ENCODE measurements at regions of chr17 and their contacts with region 1.

Region 1: GRCh38 chr17:57234751-57235117 is 21.6 kb upstream of the MSI2 start:
- DNase-seq: no peak
- ATAC-seq: no peak
- H3K4me3 ChIP-seq: no peak overlapping the region
- H3K27ac ChIP-seq: no peak overlapping the region
- H3K4me1 ChIP-seq: no peaks in the 10 kb centered on the region
- H3K27me3 ChIP-seq: no peaks in the 10 kb centered on the region
- CTCF ChIP-seq: no peak

Region 2: GRCh38 chr17:57284984-57285646 is 50.4 kb after region 1 on chr17:
- intact Hi-C with region 1: loop called in 1 of 3 experiments (anchors 10 kb)
- DNase-seq: no peak
- ATAC-seq: peak in 1 of 4 donors; percentile 48
- H3K4me3 ChIP-seq: no peak overlapping the region
- H3K27ac ChIP-seq: no peak overlapping the region
- H3K4me1 ChIP-seq: no peaks in the 10 kb centered on the region
- H3K27me3 ChIP-seq: no peaks in the 10 kb centered on the region
- CTCF ChIP-seq: no peak

Region 3: DNA sequence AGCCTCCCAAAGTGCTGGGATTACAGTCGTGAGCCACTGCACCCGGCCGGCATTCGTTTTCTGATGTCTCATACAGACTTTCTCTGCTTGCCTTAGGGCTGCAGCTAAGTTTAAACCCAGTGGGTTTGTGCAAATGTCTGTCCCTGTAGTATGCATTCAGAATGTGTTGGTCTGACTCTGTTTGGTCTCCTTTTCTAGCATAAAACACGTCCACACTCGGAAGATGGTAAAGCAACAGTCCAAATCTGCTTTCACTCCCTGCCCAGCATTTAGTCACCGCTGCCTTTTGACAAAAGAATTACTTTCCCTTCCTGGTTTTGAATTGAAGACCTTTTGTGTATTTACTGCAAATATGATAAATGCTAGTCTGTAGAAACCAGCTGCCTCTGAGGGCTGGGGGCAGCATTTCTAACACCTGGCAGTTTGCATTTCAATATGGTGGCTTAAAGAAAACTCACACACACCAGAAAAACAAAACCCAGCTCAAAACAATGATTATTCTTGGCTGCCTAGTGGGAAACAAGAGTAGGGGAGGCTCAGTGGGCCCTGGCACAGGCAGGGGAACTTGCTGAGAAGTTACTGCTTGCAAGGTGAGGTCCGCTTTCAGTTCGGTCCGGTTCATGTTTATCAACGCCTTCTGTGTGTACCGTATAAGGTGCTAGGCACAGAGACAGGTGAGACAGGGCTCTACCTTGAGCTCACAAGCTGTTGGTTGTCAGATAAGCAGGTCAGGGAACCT is 78.5 kb after region 1 on chr17:
- intact Hi-C with region 1: no loop called
- DNase-seq: no peak
- ATAC-seq: no peak
- H3K4me3 ChIP-seq: no peak overlapping the region
- H3K27ac ChIP-seq: no peak overlapping the region
- H3K4me1 ChIP-seq: no peaks in the 10 kb centered on the region
- H3K27me3 ChIP-seq: no peaks in the 10 kb centered on the region
- CTCF ChIP-seq: no peak